ENCODE measurements at regions of chr18 and their contacts with region 1.

Region 1: GRCh38 chr18:37368110-37368954 is 197.3 kb downstream of the CELF4 start:
- DNase-seq: no peak
- ATAC-seq: no peak
- H3K4me3 ChIP-seq: no peak overlapping the region
- H3K27ac ChIP-seq: no peak overlapping the region
- H3K4me1 ChIP-seq: no peaks in the 10 kb centered on the region
- H3K27me3 ChIP-seq: peaks cover 4 to 10% of the 10 kb centered on the region in 2 experiments; a peak in 4 of 5 replicates
- CTCF ChIP-seq: no peak
- EP300 ChIP-seq: no peak
- POLR2A ChIP-seq: no peak
- RAD21 ChIP-seq: no peak

Region 2: DNA sequence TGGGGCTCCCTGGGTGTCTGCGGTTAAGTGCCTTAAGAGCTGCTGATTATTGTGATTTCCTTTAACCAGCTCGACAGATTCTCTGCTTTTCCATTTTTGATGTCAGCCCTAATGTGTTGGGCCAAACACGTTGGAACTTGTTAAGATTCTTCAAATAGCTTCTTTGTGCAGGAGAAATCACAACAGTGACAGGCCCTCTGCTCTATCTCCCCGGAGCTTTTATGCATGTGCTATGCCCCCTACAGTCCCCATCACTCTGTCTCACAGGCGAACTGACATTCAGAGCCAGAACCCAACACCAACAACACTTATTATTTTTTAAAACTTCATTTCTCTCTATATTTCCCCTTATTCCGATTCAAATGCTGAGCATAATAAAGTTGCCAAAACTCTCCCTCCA is 569.0 kb after region 1 on chr18:
- CTCF ChIA-PET with region 1: no interaction called
- POLR2A ChIA-PET with region 1: no interaction called
- in situ Hi-C with region 1: no loop called
- intact Hi-C with region 1: no loop called
- DNase-seq: no peak
- ATAC-seq: no peak
- H3K4me3 ChIP-seq: no peak overlapping the region
- H3K27ac ChIP-seq: no peak overlapping the region
- H3K4me1 ChIP-seq: no peaks in the 10 kb centered on the region
- H3K27me3 ChIP-seq: no peaks in the 10 kb centered on the region
- CTCF ChIP-seq: no peak
- EP300 ChIP-seq: no peak
- POLR2A ChIP-seq: no peak
- RAD21 ChIP-seq: no peak

Region 3: GRCh38 chr18:38010971-38011857 is 642.9 kb after region 1 on chr18:
- CTCF ChIA-PET with region 1: no interaction called
- POLR2A ChIA-PET with region 1: no interaction called
- in situ Hi-C with region 1: no loop called
- intact Hi-C with region 1: loop called (anchors 5 kb)
- DNase-seq: no peak
- ATAC-seq: no peak
- H3K4me3 ChIP-seq: no peak overlapping the region
- H3K27ac ChIP-seq: no peak overlapping the region
- H3K4me1 ChIP-seq: no peaks in the 10 kb centered on the region
- H3K27me3 ChIP-seq: no peaks in the 10 kb centered on the region
- CTCF ChIP-seq: no peak
- EP300 ChIP-seq: no peak
- POLR2A ChIP-seq: no peak
- RAD21 ChIP-seq: no peak